ENCODE measurements at regions of chr20 and their contacts with region 1.

Region 1: DNA sequence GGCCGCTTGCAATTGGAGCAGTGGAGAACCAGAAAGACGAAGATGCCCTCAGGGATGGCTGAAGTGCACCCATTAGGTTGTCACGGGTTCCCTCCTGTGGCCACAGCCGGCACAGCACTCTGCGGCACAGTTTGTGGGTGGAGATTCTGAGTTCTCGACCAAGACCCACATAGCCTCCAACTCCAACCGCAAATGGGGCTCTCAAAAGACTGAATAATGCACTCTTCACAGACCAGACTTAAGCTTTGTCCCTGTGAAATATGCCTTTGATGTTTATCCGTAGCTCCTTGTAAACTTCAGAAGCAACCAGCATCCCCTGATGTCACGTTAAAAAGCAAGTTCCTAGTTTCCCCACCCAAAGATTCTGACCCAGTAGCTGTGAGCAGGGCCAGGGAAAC is 934 bp upstream of the CST9 start:
- DNase-seq: peak; percentile 61
- H3K4me3 ChIP-seq: no peak overlapping the region
- H3K27ac ChIP-seq: no peak overlapping the region
- H3K4me1 ChIP-seq: no peaks in the 10 kb centered on the region
- H3K27me3 ChIP-seq: no peaks in the 10 kb centered on the region
- CTCF ChIP-seq: peak; percentile 97

Region 2: GRCh38 chr20:23350196-23350903 is 256.3 kb before region 1 on chr20 and contains the start of gene NXT1:
- CTCF ChIA-PET with region 1: no interaction called
- dilution Hi-C with region 1: no loop called
- in situ Hi-C with region 1: no loop called
- intact Hi-C with region 1: loop called (anchors 1 kb)
- DNase-seq: peak; percentile 99
- H3K4me3 ChIP-seq: peak within 1 kb of the TSS; percentile 74 to 89 (median 78)
- H3K27ac ChIP-seq: peak within 1 kb of the TSS; percentile 81
- H3K4me1 ChIP-seq: peaks cover 13% of the 10 kb centered on the region
- H3K27me3 ChIP-seq: no peaks in the 10 kb centered on the region
- CTCF ChIP-seq: peak in 1 of 2 donors; percentile 0
- total RNA-seq, gene NXT1: 22.0 to 28.5 TPM

Region 3: DNA sequence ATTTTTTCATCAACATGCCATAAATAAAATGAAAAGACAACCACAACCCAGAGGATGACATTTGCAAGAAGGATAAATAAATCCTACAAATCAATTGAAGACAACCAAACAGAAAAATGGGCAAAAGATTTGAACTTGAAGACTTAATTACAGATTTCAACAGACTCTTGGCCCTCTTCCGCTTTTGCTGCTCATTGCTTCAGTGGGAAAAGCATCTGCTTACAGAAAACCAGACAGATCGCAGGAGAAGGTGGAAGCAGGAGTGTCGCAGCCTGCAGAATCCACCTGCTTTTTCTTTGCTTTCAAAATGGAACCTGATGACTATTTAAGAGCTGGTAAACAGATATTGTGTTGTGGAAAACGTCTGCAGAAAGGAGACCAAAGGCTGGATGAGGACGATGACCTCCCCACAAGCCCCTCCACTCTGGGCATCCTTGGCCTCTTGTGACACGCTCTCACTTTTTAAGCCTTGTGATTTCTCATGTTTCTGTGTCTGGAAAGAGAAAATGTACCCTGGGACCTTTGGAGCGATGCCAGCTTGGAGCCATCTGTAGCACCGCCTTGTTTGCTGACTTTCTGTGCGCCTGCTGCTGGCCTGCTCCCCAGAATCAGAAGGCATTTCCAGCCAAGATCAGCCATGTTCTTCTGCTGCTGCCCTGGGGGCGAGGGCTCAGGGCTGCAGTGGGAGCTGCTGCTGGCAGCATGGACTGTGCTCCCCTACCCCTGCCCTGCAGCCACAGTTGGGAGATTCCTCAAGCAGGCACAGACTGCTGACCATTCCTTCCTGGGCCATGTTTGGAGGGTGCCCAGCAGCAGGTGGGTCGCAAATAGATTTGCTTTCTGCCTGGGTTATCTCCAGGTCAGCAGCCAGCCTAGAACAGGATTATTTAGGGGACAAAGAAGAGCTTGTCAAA is 170.8 kb before region 1 on chr20:
- CTCF ChIA-PET with region 1: interaction called, 3 read pairs
- dilution Hi-C with region 1: loop called (anchors 10 kb)
- in situ Hi-C with region 1: loop called (anchors 5 to 10 kb)
- intact Hi-C with region 1: loop called (anchors 1 kb)
- DNase-seq: no peak
- H3K4me3 ChIP-seq: no peak overlapping the region
- H3K27ac ChIP-seq: no peak overlapping the region
- H3K4me1 ChIP-seq: no peaks in the 10 kb centered on the region
- H3K27me3 ChIP-seq: no peaks in the 10 kb centered on the region
- CTCF ChIP-seq: no peak

Region 4: DNA sequence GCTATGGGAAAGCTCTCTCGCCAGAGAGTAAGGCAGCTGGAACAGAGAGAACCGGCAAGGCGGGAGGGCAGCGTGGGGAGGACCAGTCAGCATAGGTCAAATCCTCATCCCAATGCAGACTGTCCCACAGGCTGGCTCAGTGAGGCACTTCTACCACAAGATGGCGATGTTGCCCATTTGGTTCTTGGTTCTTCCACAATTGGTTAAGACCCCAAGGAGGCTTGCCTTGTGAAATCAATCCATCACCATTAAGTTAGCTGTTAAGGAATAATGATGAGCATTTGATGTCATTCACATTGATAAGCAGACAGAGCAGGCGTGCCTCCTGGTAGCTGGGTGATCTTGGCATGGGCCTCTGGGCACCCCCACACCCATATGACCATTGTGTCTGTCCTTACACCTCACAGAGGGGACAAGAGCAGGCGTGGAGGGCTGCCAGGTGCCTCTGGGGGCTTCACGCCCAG is 164.8 kb before region 1 on chr20:
- CTCF ChIA-PET with region 1: interaction called, 3 read pairs
- dilution Hi-C with region 1: loop called (anchors 10 kb)
- in situ Hi-C with region 1: loop called (anchors 5 to 10 kb)
- intact Hi-C with region 1: loop called (anchors 1 kb)
- DNase-seq: peak; percentile 65
- H3K4me3 ChIP-seq: no peak overlapping the region
- H3K27ac ChIP-seq: no peak overlapping the region
- H3K4me1 ChIP-seq: peaks cover 14% of the 10 kb centered on the region
- H3K27me3 ChIP-seq: no peaks in the 10 kb centered on the region
- CTCF ChIP-seq: peak; percentile 92 to 95

Region 5: GRCh38 chr20:23637282-23638221 is 30.9 kb after region 1 on chr20 and contains the start of gene CST3:
- CTCF ChIA-PET with region 1: no interaction called
- dilution Hi-C with region 1: no loop called
- in situ Hi-C with region 1: no loop called
- intact Hi-C with region 1: loop called (anchors 1 kb)
- DNase-seq: peak; percentile 82
- H3K4me3 ChIP-seq: peak within 1 kb of the TSS; percentile 77 to 78 (median 78)
- H3K27ac ChIP-seq: peak within 1 kb of the TSS; percentile 81
- H3K4me1 ChIP-seq: peaks cover 38% of the 10 kb centered on the region
- H3K27me3 ChIP-seq: no peaks in the 10 kb centered on the region
- CTCF ChIP-seq: no peak
- total RNA-seq, gene CST3: 158 to 380 TPM

Region 6: DNA sequence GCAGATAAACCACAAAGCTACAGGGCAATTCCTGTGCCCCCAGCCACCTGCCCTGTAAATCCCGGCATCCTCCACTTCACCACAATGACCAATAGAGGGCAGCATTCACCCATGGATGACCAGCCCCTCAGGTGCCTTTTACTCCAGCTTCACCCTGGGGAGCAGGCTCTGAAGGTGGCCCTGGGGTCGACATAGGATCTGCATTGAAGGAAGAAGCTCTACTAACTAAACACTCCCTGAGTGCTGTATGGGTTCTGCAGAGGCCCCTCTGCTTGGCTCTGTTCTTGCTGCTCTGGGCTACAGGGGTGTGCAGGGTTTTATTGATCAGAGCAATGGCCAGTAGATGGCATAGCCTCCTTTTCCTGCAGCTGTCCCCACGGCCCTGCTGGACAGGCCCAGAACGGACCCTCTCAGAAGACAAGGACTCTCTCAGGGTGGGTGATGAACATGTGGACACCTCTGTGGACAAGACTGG is 61.9 kb after region 1 on chr20:
- CTCF ChIA-PET with region 1: no interaction called
- dilution Hi-C with region 1: no loop called
- in situ Hi-C with region 1: no loop called
- intact Hi-C with region 1: loop called (anchors 2 kb)
- DNase-seq: peak; percentile 49
- H3K4me3 ChIP-seq: no peak overlapping the region
- H3K27ac ChIP-seq: no peak overlapping the region
- H3K4me1 ChIP-seq: no peaks in the 10 kb centered on the region
- H3K27me3 ChIP-seq: no peaks in the 10 kb centered on the region
- CTCF ChIP-seq: peak; percentile 81 to 86